ENCODE measurements at regions of chr10 and their contacts with region 1.

Region 1: DNA sequence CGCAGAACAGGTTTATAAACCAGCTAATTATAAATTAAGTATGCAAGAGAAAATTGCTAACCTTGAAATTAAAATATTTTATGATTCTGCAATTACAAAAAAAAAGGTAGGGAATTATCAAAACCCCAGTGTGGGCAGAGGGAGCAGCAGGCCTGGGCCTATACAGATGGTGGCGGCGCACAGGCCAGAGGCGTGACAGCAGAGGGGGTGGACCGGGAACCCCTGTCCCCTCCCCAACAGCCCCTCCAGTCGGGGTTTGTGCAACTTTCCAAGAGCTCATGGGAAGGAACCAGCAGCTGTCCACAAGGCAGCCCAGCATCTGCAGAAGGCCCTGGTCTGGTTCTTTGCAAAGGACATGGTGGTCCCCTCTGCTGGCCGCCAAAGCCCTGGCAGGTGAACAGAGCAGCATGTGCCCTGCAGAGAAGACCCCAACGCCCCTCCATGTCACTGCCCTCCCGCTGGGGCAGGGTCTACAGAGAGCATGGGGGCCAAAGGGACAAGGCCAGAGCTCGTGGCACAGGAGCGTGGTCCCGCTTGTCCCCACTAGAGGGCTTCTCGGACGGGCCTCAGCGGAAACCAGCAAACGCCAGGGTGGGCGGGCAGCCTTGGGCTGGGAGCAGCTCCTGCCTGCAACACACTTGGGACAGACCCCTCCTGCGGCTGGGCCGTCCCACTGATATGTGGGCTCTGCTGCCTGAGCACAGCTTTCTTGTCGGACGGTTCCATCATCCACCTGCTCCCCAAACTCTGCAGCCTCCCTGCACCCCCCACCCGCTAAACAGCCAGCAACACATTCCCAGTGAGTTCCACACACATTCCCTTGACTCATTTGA is 75.1 kb downstream of the EBF3 start:
- DNase-seq: peak; percentile 15
- ATAC-seq: peak; percentile 81
- H3K4me3 ChIP-seq: no peak overlapping the region
- H3K27ac ChIP-seq: no peak overlapping the region
- H3K4me1 ChIP-seq: no peaks in the 10 kb centered on the region
- H3K27me3 ChIP-seq: no peaks in the 10 kb centered on the region
- CTCF ChIP-seq: peak; percentile 39
- POLR2A ChIP-seq: no peak
- RAD21 ChIP-seq: peak; percentile 41

Region 2: GRCh38 chr10:129023082-129023481 is 865.9 kb before region 1 on chr10:
- CTCF ChIA-PET with region 1: no interaction called
- POLR2A ChIA-PET with region 1: no interaction called
- dilution Hi-C with region 1: no loop called
- in situ Hi-C with region 1: no loop called
- intact Hi-C with region 1: loop called (anchors 10 kb)
- DNase-seq: peak; percentile 15
- ATAC-seq: peak; percentile 64
- H3K4me3 ChIP-seq: no peak overlapping the region
- H3K27ac ChIP-seq: no peak overlapping the region; the same call in 1 of the 2 replicates
- H3K4me1 ChIP-seq: peaks cover 5% of the 10 kb centered on the region; the same call in 1 of the 2 replicates
- H3K27me3 ChIP-seq: no peaks in the 10 kb centered on the region
- CTCF ChIP-seq: no peak
- POLR2A ChIP-seq: no peak
- RAD21 ChIP-seq: no peak